Activated CD8-positive, alpha-beta memory T cell treated with anti-CD3 and anti-CD28 coated beads, Interleukin-2, amount 10 ng/mL, durations not matched to agents 7 days and 5 days (primary cell): ENCODE measurements at regions of chr14 and their contacts with region 1.

Region 1: GRCh38 chr14:106062502-106063272 is 536.3 kb downstream of the TMEM121 start:
- DNase-seq: no peak
- ATAC-seq: no peak
- H3K4me3 Mint-ChIP-seq: no peak overlapping the region
- H3K27ac Mint-ChIP-seq: no peak overlapping the region
- H3K4me1 Mint-ChIP-seq: peaks cover 16% of the 10 kb centered on the region
- H3K27me3 Mint-ChIP-seq: peaks cover 64% of the 10 kb centered on the region

Region 2: GRCh38 chr14:106039400-106039799 is 23.3 kb before region 1 on chr14:
- CTCF ChIA-PET with region 1: interaction called, 10 read pairs
- DNase-seq: peak; percentile 60
- ATAC-seq: peak; percentile 33
- H3K4me3 Mint-ChIP-seq: no peak overlapping the region
- H3K27ac Mint-ChIP-seq: no peak overlapping the region
- H3K4me1 Mint-ChIP-seq: peaks cover 1% of the 10 kb centered on the region
- H3K27me3 Mint-ChIP-seq: peaks cover 53% of the 10 kb centered on the region